CD8-positive, alpha-beta T cell (primary cell): ENCODE measurements at regions of chr2 and their contacts with region 1.

Region 1: GRCh38 chr2:236569573-236569973 is at the start of gene ACKR3:
- DNase-seq: peak; percentile 46 to 96 (median 77)
- ATAC-seq: peak; percentile 98
- H3K4me3 ChIP-seq: peak within 1 kb of the TSS; percentile 44 to 54
- H3K4me3 Mint-ChIP-seq: peak within 1 kb of the TSS; percentile 84
- H3K27ac ChIP-seq: peak within 1 kb of the TSS in 1 of 2 experiments; percentile 4
- H3K27ac Mint-ChIP-seq: peak within 1 kb of the TSS; percentile 72
- H3K4me1 ChIP-seq: peaks cover 15% of the 10 kb centered on the region
- H3K4me1 Mint-ChIP-seq: peaks cover 33% of the 10 kb centered on the region
- H3K27me3 ChIP-seq: no peaks in the 10 kb centered on the region
- H3K27me3 Mint-ChIP-seq: no peaks in the 10 kb centered on the region
- CTCF ChIP-seq: peak; percentile 53
- total RNA-seq, gene ACKR3: 0.50 to 2.0 TPM

Region 2: GRCh38 chr2:236343400-236344161 is 226.0 kb before region 1 on chr2:
- CTCF ChIA-PET with region 1: interaction called, 19 read pairs
- POLR2A ChIA-PET with region 1: no interaction called
- intact Hi-C with region 1: no loop called
- DNase-seq: peak in 8 of 9 experiments; percentile 27 to 73 (median 47)
- ATAC-seq: peak; percentile 57
- H3K4me3 ChIP-seq: no peak overlapping the region
- H3K4me3 Mint-ChIP-seq: no peak overlapping the region
- H3K27ac ChIP-seq: no peak overlapping the region
- H3K27ac Mint-ChIP-seq: no peak overlapping the region
- H3K4me1 ChIP-seq: no peaks in the 10 kb centered on the region
- H3K4me1 Mint-ChIP-seq: no peaks in the 10 kb centered on the region
- H3K27me3 ChIP-seq: no peaks in the 10 kb centered on the region
- H3K27me3 Mint-ChIP-seq: peaks cover 5% of the 10 kb centered on the region
- CTCF ChIP-seq: peak; percentile 86

Region 3: DNA sequence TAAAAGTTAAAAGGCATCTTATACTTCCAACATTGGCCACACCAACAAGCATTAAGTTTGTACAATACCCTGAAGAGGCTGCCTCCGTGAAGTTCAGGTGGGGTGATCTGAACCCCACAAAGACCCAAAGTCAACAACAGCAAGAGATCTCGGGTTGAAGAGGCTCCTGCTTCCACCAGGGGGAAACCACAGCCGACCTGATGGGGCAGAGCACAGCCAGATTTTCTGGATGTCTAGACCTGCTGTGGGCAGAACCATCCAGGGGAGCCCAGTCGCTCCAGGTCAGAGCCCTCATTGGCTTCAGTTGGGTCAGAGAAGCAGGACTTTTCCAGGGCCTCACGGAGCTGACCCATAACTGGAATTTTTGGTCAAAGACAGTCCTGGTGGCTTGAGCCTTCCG is 66.5 kb before region 1 on chr2:
- CTCF ChIA-PET with region 1: interaction called, 323 read pairs
- POLR2A ChIA-PET with region 1: interaction called, 8 read pairs
- intact Hi-C with region 1: no loop called
- DNase-seq: peak in 2 of 9 experiments; percentile 20 to 39
- ATAC-seq: no peak
- H3K4me3 ChIP-seq: no peak overlapping the region
- H3K4me3 Mint-ChIP-seq: no peak overlapping the region
- H3K27ac ChIP-seq: no peak overlapping the region
- H3K27ac Mint-ChIP-seq: no peak overlapping the region
- H3K4me1 ChIP-seq: peaks cover 7% of the 10 kb centered on the region
- H3K4me1 Mint-ChIP-seq: peaks cover 14% of the 10 kb centered on the region
- H3K27me3 ChIP-seq: peaks cover 0 to 3% of the 10 kb centered on the region in 2 experiments
- H3K27me3 Mint-ChIP-seq: peaks cover 18% of the 10 kb centered on the region
- CTCF ChIP-seq: no peak

Region 4: DNA sequence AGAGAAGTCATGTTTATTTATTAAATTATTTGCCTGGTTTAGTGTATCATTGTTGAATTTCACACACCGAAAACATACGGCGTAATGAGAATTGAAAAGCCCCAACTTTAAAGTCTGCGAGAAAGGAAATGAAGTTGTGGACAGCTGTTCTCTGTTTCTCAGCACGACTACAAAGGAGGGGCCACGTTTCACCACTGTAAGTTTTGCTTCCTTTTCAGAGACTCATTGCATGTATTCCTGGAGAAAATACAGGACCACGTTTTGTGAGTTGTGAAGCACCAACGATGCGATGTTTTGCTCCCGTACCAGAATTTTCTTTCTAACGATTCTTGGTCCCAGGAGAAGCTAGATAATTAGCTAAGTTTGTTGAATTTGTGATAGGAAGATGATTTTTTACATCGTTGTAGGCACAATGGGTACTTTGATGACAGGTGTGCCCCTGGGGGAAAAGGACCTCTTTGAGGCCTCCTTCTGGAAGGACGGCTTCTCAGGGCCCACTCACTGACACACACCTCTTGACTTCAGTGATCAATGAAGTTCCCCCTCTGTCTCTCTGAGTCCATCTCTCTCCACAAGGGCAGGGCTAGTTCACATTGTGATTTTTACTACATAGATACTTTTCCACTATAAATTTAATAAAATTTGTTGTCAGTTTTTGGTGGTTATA is 23.6 kb before region 1 on chr2:
- CTCF ChIA-PET with region 1: interaction called, 31 read pairs
- POLR2A ChIA-PET with region 1: interaction called, 11 read pairs
- intact Hi-C with region 1: loop called in 1 of 2 experiments (anchors 2 kb)
- DNase-seq: peak in 3 of 9 experiments; percentile 36 to 76 (median 58)
- ATAC-seq: peak; percentile 53
- H3K4me3 ChIP-seq: peak overlapping the region; percentile 17 to 33
- H3K4me3 Mint-ChIP-seq: peak overlapping the region; percentile 74
- H3K27ac ChIP-seq: peak overlapping the region; percentile 50 to 87
- H3K27ac Mint-ChIP-seq: peak overlapping the region; percentile 87
- H3K4me1 ChIP-seq: peaks cover 75% of the 10 kb centered on the region
- H3K4me1 Mint-ChIP-seq: peaks cover 95% of the 10 kb centered on the region
- H3K27me3 ChIP-seq: no peaks in the 10 kb centered on the region
- H3K27me3 Mint-ChIP-seq: no peaks in the 10 kb centered on the region
- CTCF ChIP-seq: no peak

Region 5: GRCh38 chr2:237026981-237027711 is 457.6 kb after region 1 on chr2:
- CTCF ChIA-PET with region 1: interaction called, 11 read pairs
- POLR2A ChIA-PET with region 1: no interaction called
- intact Hi-C with region 1: loop called in 1 of 2 experiments (anchors 1 kb)
- DNase-seq: peak; percentile 16 to 57 (median 46)
- ATAC-seq: peak; percentile 49
- H3K4me3 ChIP-seq: no peak overlapping the region
- H3K4me3 Mint-ChIP-seq: no peak overlapping the region
- H3K27ac ChIP-seq: no peak overlapping the region
- H3K27ac Mint-ChIP-seq: no peak overlapping the region
- H3K4me1 ChIP-seq: no peaks in the 10 kb centered on the region
- H3K4me1 Mint-ChIP-seq: no peaks in the 10 kb centered on the region
- H3K27me3 ChIP-seq: no peaks in the 10 kb centered on the region
- H3K27me3 Mint-ChIP-seq: no peaks in the 10 kb centered on the region
- CTCF ChIP-seq: peak; percentile 59

Region 6: DNA sequence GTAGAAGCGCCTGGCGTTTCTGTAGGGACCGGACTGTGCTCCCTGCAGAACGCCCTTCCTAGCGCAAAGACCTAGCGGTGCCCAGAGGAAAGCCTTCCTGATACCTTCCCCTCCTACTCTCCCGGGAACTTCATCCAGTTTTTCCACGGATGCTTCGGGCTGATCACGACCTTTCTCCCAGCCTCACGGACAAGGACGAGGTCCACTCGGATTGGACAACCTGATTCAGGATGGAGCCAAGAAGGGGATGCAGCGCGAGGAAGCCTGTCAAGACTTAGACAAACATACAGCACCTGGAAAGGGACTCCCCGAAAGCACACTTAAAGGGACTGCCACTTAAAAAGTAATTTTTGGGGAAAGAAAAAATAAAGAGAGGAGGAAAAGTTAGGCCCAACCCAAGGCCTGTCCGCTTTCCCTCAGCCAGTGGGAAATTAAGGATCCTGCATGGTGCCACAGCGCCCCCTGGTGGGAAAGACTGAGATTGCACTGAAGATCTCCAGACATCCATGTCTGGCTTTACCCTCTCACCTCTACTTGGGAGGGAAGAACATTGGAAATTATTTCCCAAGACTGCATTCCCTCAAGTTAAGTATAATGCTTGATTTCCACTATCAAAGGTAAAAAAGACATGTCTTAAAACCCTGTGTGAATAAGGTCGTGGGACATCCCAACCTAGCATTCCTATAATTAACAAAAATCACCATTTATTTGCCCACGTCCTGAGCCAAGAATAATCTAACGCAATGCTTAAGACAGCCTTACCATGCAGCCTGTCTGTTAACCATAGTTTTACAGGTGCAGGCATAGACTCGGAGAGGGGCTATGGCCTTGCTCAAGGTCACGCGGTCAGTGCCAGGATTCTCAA is 502.7 kb after region 1 on chr2:
- CTCF ChIA-PET with region 1: no interaction called
- POLR2A ChIA-PET with region 1: no interaction called
- intact Hi-C with region 1: loop called in 1 of 2 experiments (anchors 2 kb)
- DNase-seq: peak; percentile 47 to 83 (median 69)
- ATAC-seq: peak; percentile 48
- H3K4me3 ChIP-seq: no peak overlapping the region
- H3K4me3 Mint-ChIP-seq: no peak overlapping the region
- H3K27ac ChIP-seq: no peak overlapping the region
- H3K27ac Mint-ChIP-seq: no peak overlapping the region
- H3K4me1 ChIP-seq: no peaks in the 10 kb centered on the region
- H3K4me1 Mint-ChIP-seq: no peaks in the 10 kb centered on the region
- H3K27me3 ChIP-seq: no peaks in the 10 kb centered on the region
- H3K27me3 Mint-ChIP-seq: no peaks in the 10 kb centered on the region
- CTCF ChIP-seq: peak; percentile 98